MCF 10A (cell line): ENCODE measurements at regions of chr5 and their contacts with region 1.

Region 1: DNA sequence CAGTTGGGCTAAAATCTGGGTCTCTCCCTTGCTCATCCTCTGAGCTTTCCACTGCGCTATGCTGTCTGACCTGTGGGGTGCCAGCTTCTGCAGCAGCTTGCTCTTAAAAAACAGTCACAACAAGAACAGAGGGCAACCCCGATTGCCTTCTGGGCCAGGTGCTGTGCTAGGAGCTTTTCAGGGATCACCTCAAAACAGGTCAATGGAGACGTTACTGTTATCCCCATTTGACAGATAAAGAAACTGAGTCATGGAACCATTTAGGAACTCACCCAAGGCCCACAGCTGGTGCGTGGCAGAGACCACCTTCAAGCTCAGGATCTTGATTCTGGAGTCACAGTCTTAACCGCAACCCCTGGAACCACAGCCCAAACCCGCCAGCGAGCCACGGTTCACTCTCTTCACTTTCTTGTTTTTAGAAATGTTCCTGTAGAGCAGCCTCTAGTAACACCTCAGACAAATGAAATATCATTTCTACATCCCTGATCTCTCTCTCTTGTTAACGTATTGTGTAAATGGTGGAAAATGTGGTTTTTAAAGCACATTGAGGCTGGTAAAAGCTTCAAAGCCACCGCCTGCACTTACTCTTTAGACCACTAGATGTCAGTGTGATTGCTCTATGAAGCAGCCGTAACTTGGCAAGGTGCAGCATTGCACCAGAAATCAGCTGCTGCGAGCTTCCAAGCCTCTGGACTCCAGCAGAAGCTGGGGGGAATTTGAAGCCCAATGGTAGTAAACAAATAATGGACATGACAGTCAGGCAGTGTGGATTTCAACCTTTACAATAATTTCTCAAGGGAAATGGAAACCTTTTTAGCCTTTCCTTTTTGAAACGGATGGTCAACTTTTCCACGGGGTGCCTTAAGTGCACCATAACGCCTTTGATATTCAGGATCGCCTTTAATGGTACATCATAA is 1.7 kb downstream of the FYB1 start:
- DNase-seq: peak; percentile 83
- H3K4me3 Mint-ChIP-seq: no peak overlapping the region
- H3K27ac Mint-ChIP-seq: no peak overlapping the region
- H3K4me1 Mint-ChIP-seq: peaks cover 22% of the 10 kb centered on the region
- H3K27me3 Mint-ChIP-seq: no peaks in the 10 kb centered on the region
- CTCF ChIP-seq: peak; percentile 89

Region 2: GRCh38 chr5:38994324-38994927 is 223.2 kb before region 1 on chr5:
- CTCF ChIA-PET with region 1: no interaction called
- POLR2A ChIA-PET with region 1: no interaction called
- intact Hi-C with region 1: loop called (anchors 5 kb)
- DNase-seq: peak; percentile 76
- H3K4me3 Mint-ChIP-seq: no peak overlapping the region
- H3K27ac Mint-ChIP-seq: no peak overlapping the region
- H3K4me1 Mint-ChIP-seq: peaks cover 6% of the 10 kb centered on the region
- H3K27me3 Mint-ChIP-seq: no peaks in the 10 kb centered on the region
- CTCF ChIP-seq: peak; percentile 45

Region 3: GRCh38 chr5:39148983-39149534 is 68.6 kb before region 1 on chr5:
- CTCF ChIA-PET with region 1: interaction called, 20 read pairs
- POLR2A ChIA-PET with region 1: no interaction called
- intact Hi-C with region 1: loop called (anchors 2 kb)
- DNase-seq: peak; percentile 29
- H3K4me3 Mint-ChIP-seq: no peak overlapping the region
- H3K27ac Mint-ChIP-seq: no peak overlapping the region
- H3K4me1 Mint-ChIP-seq: no peaks in the 10 kb centered on the region
- H3K27me3 Mint-ChIP-seq: no peaks in the 10 kb centered on the region
- CTCF ChIP-seq: peak; percentile 49

Region 4: DNA sequence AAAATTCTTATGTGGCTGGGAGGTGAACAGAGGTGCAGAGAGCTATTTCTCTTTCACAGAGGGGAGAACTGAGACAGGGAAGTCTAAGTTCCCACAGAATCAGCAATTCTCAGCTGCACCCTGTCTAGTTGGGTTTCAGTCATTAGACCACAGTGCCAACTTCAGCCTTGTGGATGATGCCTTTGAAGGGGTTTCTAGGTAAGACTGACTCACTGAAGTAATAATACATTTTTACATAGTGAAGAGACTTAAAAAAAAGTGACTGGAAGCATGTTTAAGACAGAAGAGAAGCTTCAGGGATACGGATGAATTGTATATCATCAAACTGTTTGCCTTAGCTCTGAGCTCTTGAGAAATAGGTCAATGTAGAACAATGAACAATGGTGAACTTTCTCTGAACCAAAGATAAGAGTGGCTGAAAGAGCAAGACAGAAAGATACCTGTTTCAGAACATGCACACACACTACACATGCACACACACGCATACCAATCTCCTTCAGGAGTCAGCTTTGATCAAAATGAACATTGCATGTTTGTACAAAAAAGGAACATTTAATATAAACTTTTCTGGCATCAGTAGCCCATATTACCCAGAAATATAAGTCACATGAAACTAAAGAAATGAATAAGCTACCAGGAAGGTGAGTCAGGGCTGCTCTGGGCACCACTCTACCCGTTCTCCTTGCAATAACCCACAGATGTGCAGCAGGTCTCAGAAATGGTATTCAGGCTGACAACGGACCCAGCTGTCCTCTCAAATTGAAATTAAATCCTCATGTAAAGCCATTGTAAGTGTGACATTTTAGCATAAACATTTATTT is 14.3 kb after region 1 on chr5:
- CTCF ChIA-PET with region 1: interaction called, 17 read pairs
- POLR2A ChIA-PET with region 1: interaction called, 7 read pairs
- intact Hi-C with region 1: no loop called
- DNase-seq: peak; percentile 41
- H3K4me3 Mint-ChIP-seq: no peak overlapping the region
- H3K27ac Mint-ChIP-seq: no peak overlapping the region
- H3K4me1 Mint-ChIP-seq: peaks cover 9% of the 10 kb centered on the region
- H3K27me3 Mint-ChIP-seq: no peaks in the 10 kb centered on the region
- CTCF ChIP-seq: no peak

Region 5: DNA sequence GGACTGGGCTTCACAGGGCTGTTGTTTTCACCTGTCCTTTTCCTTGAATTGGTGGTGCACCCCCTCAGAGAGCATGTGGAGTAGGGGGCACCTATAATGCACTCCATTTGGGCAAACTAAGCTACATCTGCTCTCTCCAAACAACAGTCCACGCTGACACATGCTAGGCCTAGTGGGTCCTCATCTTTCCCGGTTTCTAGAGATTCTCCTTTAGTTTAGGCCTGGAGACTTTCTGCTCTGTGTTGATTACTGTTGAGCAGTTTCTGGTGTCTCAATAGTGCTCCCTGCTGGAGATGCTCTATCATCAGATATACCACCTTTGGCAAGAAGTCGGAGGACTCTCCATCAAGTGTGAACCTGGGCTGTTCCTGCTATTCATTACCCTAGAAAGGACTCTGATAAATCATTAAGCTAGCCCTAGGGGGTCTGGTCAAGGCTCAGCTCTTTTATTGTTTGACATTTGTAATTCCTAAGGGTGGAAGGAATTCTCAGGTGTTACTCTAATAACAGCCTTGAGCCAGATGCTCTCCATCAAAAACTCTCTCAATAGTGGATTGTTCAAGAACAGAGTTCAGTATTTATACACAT is 65.7 kb after region 1 on chr5:
- CTCF ChIA-PET with region 1: interaction called, 223 read pairs
- POLR2A ChIA-PET with region 1: interaction called, 9 read pairs
- intact Hi-C with region 1: loop called (anchors 1 kb)
- DNase-seq: peak; percentile 81
- H3K4me3 Mint-ChIP-seq: no peak overlapping the region
- H3K27ac Mint-ChIP-seq: no peak overlapping the region
- H3K4me1 Mint-ChIP-seq: peaks cover 6% of the 10 kb centered on the region
- H3K27me3 Mint-ChIP-seq: no peaks in the 10 kb centered on the region
- CTCF ChIP-seq: peak; percentile 54

Region 6: DNA sequence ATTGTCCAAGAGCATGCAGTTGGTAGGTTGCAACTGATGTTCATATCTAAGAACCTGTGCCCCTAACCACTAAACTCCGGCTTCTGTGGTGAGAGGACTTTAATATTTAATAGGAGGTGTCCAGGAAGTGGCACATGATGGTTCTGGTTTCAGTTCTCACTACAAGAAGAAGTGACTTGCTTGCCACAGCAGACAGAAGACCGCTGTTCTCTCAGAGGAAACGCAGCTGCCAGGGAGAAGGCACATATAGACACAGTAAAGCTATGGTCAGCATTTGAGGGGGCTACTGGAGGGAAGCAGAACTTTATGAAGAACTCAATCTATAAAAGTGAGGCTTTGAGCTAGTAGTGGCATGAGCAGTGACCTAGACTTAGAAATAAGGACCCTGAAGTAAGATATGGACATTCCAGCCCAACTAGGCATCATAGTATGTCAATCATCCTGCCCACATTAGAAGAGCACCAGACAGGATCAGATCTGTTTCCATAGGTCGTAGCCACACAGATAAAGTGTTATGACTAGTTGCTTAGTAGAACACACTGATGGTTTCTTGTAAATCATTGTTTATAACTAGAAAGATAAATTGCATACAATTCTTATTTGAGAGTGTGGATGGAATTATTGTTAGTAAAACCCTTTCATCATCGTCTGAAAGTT is 243.5 kb after region 1 on chr5:
- CTCF ChIA-PET with region 1: no interaction called
- POLR2A ChIA-PET with region 1: no interaction called
- intact Hi-C with region 1: no loop called
- DNase-seq: no peak
- H3K4me3 Mint-ChIP-seq: no peak overlapping the region
- H3K27ac Mint-ChIP-seq: no peak overlapping the region
- H3K4me1 Mint-ChIP-seq: no peaks in the 10 kb centered on the region
- H3K27me3 Mint-ChIP-seq: peaks cover 50% of the 10 kb centered on the region
- CTCF ChIP-seq: no peak

Region 7: DNA sequence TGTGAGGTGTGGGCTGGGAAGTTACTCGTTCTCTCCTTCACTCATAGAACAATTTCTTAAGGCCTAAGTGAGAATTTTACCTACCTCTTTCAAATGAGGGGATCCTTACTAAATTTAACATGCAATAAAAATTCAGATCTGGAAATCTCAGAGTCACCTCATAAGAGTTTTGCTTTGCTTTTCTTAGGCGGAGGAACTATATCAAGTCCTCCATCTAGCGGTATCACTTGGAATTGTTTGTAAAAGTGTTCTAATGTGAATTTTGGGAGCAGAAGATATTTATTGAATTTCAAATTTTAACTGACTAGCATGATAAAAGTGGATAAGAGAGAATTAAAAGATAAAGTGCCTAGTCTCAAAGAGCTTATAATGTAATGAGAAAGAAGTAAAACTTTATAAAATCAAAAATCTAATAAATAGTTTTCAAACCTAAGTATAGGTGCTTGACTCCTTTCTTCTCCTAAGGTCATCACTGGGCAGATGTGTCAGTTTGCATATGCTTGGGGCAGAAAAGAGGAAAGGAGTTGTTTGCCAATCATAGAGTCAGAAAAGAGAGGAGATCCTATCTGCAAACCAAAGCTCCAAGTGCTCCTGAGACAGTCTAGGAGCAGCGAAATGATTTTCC is 352.9 kb after region 1 on chr5:
- CTCF ChIA-PET with region 1: interaction called, 13 read pairs
- POLR2A ChIA-PET with region 1: no interaction called
- intact Hi-C with region 1: loop called (anchors 2 kb)
- DNase-seq: peak; percentile 44
- H3K4me3 Mint-ChIP-seq: no peak overlapping the region
- H3K27ac Mint-ChIP-seq: no peak overlapping the region
- H3K4me1 Mint-ChIP-seq: no peaks in the 10 kb centered on the region
- H3K27me3 Mint-ChIP-seq: no peaks in the 10 kb centered on the region
- CTCF ChIP-seq: peak; percentile 64